Activated CD4-positive, alpha-beta T cell treated with anti-CD3 and anti-CD28 coated beads for 36 hours (primary cell): ENCODE measurements at regions of chr1 and their contacts with region 1.

Region 1: DNA sequence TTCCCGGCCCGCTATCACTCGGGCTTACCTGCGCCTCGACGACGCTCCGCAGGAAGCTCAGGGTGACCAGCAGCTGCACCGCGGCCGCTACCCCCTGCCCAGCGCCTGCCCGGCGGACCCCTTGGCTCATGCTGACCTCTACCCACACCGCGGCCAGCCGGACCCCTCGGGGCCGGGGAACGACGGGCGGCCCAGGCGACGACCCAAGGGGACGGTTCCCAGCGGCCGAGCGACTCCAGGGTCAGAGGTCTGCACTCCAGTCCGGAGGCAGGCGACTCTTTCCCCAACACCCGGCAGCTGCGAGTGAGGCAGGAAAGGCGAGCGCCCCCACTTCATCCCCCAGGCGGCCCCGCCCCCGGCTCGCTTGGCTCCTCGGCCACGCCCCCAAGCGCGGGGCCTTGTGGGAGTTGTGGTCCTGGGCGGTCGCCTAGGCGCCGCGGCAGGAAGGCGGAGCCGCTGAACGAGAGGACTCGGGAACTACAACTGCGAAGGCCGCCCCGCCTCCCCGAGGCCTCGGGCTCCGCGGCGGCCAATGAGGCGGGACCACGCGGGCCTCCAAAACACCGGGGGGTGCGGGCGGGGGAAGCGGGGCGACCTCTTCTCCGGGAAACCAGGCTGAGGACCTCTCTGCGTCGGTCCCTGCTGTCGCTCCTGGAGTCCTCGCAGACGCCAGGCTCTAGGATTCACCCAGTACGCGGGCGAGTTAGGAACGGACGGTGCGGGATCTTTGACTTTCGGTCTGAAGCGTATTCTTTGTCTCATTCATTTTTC is at the start of gene ERO1B:
- DNase-seq: peak; percentile 98
- ATAC-seq: peak; percentile 86
- H3K4me3 Mint-ChIP-seq: peak within 1 kb of the TSS; percentile 82
- H3K27ac Mint-ChIP-seq: peak within 1 kb of the TSS; percentile 70
- H3K4me1 Mint-ChIP-seq: peaks cover 47% of the 10 kb centered on the region
- H3K27me3 Mint-ChIP-seq: peaks cover 1% of the 10 kb centered on the region
- total RNA-seq, gene ERO1B: 2.2 to 2.8 TPM

Region 2: DNA sequence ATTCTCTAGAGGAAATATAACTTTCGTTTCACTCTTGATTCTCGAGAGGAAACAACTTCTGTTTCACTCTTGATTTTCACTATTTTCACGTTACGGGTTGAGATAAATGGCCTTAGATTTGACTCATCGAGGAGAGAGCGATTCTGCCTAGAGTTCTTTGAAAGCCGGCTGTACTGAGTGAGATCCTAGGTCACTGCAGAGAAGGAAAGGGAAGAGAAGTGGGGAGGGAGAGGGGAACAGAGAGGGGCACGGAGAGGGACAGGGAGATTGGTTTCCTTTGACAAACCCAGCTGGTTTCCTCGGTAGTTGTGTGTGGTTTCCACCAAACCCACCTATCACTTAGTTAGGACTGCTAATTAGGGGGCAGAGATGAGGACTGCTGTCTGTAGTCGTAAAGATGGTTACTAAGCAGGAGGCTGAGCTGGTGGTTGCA is 161.1 kb before region 1 on chr1:
- CTCF ChIA-PET with region 1: interaction called, 4 read pairs
- POLR2A ChIA-PET with region 1: no interaction called
- intact Hi-C with region 1: loop called (anchors 1 to 5 kb)
- DNase-seq: peak; percentile 16
- ATAC-seq: peak; percentile 77
- H3K4me3 Mint-ChIP-seq: no peak overlapping the region
- H3K27ac Mint-ChIP-seq: peak overlapping the region; percentile 8
- H3K4me1 Mint-ChIP-seq: peaks cover 26% of the 10 kb centered on the region
- H3K27me3 Mint-ChIP-seq: peaks cover 13% of the 10 kb centered on the region

Region 3: DNA sequence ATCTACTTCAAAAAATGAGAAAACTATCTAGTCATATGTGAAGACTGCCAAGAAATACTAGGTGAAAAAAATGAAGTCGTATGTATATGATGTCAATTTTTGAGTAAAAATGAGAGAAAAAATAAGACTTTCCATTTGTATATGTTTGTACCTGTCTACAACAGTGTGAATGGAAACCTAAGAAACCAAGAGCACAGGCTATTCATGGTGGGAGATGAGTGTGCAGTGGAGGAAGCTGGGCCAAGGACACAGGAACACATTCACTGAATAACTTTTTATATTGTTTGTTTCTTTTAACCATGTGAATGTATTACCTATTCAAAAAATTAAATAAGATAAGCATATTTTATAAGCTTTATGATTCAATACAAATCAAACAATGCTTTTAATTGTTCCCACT is 67.1 kb before region 1 on chr1:
- CTCF ChIA-PET with region 1: no interaction called
- POLR2A ChIA-PET with region 1: no interaction called
- intact Hi-C with region 1: loop called (anchors 1 to 2 kb)
- DNase-seq: peak; percentile 30
- ATAC-seq: peak; percentile 93
- H3K4me3 Mint-ChIP-seq: no peak overlapping the region
- H3K27ac Mint-ChIP-seq: no peak overlapping the region
- H3K4me1 Mint-ChIP-seq: peaks cover 3% of the 10 kb centered on the region
- H3K27me3 Mint-ChIP-seq: no peaks in the 10 kb centered on the region

Region 4: GRCh38 chr1:236345728-236346127 is 63.9 kb after region 1 on chr1:
- CTCF ChIA-PET with region 1: no interaction called
- POLR2A ChIA-PET with region 1: no interaction called
- intact Hi-C with region 1: no loop called
- DNase-seq: no peak
- ATAC-seq: no peak
- H3K4me3 Mint-ChIP-seq: no peak overlapping the region
- H3K27ac Mint-ChIP-seq: no peak overlapping the region
- H3K4me1 Mint-ChIP-seq: peaks cover 2% of the 10 kb centered on the region
- H3K27me3 Mint-ChIP-seq: peaks cover 14% of the 10 kb centered on the region

Region 5: DNA sequence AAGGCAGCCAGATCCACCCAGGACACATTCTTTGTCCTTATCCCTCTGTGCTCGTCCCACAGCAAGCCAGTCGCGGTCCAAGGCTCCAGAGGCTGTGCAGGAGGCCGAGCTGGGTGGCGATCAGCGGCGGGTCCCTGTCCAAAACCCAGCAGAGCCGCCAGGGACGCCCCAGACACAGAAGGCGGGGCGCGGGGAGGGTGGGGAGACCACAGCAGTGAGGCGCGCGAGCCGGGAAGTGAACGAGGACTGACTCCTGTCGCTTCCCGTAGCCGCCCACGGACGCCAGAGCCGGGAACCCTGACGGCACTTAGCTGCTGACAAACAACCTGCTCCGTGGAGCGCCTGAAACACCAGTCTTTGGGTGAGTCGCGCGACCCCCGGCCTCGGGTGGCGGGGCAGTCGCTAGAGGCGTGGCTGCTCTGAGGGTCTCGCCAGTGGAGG is 241.9 kb after region 1 on chr1 and contains the start of gene LGALS8:
- CTCF ChIA-PET with region 1: no interaction called
- POLR2A ChIA-PET with region 1: interaction called, 3 read pairs
- intact Hi-C with region 1: loop called (anchors 1 to 5 kb)
- DNase-seq: peak; percentile 94
- ATAC-seq: peak; percentile 79
- H3K4me3 Mint-ChIP-seq: peak within 1 kb of the TSS; percentile 99
- H3K27ac Mint-ChIP-seq: peak within 1 kb of the TSS; percentile 98
- H3K4me1 Mint-ChIP-seq: peaks cover 25% of the 10 kb centered on the region
- H3K27me3 Mint-ChIP-seq: no peaks in the 10 kb centered on the region
- total RNA-seq, gene LGALS8: 106 to 155 TPM